Spleen (tissue), 13 donors: ENCODE measurements at regions of chr7 and their contacts with region 1.

Region 1: DNA sequence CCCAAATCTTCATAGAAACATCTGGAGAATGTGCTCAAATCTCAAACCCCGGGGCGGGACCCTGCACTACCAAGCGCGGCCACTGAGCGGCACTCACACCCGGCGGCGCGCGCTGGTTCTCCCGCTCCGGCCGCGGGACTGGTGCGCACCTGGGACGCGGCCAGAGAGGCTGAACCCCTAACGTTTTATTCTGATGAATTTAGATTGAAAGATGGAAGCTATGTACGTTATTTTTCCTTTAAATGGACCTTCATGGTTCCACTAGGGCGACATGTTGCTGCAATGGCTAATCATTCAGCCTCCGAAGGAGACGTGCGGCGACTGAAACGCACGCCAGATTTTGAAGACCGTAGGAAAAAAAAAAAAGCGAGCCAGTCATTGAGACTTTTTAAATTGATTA is 107.0 kb upstream of the INSIG1 start:
- DNase-seq: peak; percentile 93
- H3K4me3 ChIP-seq: peak overlapping the region in 1 of 8 donors; percentile 12
- H3K27ac ChIP-seq: no peak overlapping the region
- H3K4me1 ChIP-seq: peaks cover 0 to 6% (median 5%) of the 10 kb centered on the region in 6 donors
- H3K27me3 ChIP-seq: peaks cover 0 to 40% (median 0%) of the 10 kb centered on the region in 7 donors
- CTCF ChIP-seq: peak; percentile 69 to 94 (median 86)
- POLR2A ChIP-seq: no peak

Region 2: DNA sequence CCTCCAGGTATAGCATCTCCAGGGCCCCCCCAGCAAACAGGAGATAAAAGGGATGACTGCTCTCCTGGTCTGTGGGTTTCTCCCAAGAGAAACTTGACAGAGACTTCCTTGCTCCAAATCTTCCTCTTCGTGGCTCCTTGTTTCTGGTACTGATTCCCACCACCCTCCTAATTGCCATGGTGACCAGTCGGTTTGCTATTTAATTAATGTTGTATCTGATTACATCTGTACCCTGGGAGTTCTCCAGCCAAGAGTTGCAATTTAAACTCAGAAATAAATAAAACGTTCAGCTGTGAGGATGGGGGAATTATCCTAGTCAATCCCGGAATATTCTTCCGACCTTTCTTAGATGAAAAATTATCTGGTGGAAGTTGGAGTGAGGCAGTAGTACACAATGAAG is 452.5 kb before region 1 on chr7:
- intact Hi-C with region 1: no loop called
- DNase-seq: no peak
- H3K4me3 ChIP-seq: no peak overlapping the region
- H3K27ac ChIP-seq: no peak overlapping the region
- H3K4me1 ChIP-seq: no peaks in the 10 kb centered on the region
- H3K27me3 ChIP-seq: peaks cover 0 to 8% (median 0%) of the 10 kb centered on the region in 7 donors
- CTCF ChIP-seq: no peak
- POLR2A ChIP-seq: no peak

Region 3: GRCh38 chr7:155344600-155345433 is 154.1 kb after region 1 on chr7:
- intact Hi-C with region 1: loop called (anchors 2 kb)
- DNase-seq: peak; percentile 96
- H3K4me3 ChIP-seq: peak overlapping the region; percentile 26 to 69 (median 36)
- H3K27ac ChIP-seq: peak overlapping the region in 1 of 8 donors; percentile 15
- H3K4me1 ChIP-seq: peaks cover 0 to 14% (median 11%) of the 10 kb centered on the region in 6 donors
- H3K27me3 ChIP-seq: peaks cover 0 to 42% (median 5%) of the 10 kb centered on the region in 7 donors
- CTCF ChIP-seq: peak; percentile 67 to 99 (median 93)
- POLR2A ChIP-seq: no peak